Activated naive CD4-positive, alpha-beta T cell treated with anti-CD3 and anti-CD28 coated beads, Interleukin-2, amount 10 ng/mL, durations not matched to agents 7 days and 5 days (primary cell): ENCODE measurements at regions of chr15 and their contacts with region 1.

Region 1: GRCh38 chr15:71386448-71387236 is 271.4 kb downstream of the THSD4 start:
- DNase-seq: no peak
- H3K4me3 Mint-ChIP-seq: no peak overlapping the region
- H3K27ac Mint-ChIP-seq: no peak overlapping the region
- H3K4me1 Mint-ChIP-seq: peaks cover 3% of the 10 kb centered on the region
- H3K27me3 Mint-ChIP-seq: peaks cover 22% of the 10 kb centered on the region

Region 2: DNA sequence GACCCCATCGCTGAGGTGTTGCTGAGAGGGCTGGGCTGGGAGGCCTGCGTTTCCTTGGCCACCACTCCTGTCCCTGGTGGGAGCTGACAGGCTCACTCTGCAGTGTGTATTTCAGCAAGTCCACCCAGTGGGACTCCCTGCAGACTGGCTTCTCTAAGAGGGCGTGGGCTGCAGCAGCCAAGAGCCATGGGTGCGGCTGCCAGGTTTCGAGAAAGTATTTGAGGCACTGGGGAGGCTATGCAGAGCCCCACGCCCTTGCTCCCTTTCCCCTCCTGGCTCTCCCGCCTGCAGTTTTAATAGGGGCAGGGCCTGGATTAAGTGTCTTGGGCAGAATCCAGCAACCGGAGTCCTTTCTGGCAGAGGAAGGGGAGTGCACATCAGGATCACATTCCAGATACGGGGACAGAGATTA is 29.3 kb before region 1 on chr15:
- CTCF ChIA-PET with region 1: no interaction called
- DNase-seq: no peak
- H3K4me3 Mint-ChIP-seq: no peak overlapping the region
- H3K27ac Mint-ChIP-seq: no peak overlapping the region
- H3K4me1 Mint-ChIP-seq: no peaks in the 10 kb centered on the region
- H3K27me3 Mint-ChIP-seq: peaks cover 6% of the 10 kb centered on the region

Region 3: GRCh38 chr15:71443538-71443937 is 56.9 kb after region 1 on chr15:
- CTCF ChIA-PET with region 1: interaction called, 15 read pairs
- DNase-seq: peak; percentile 58
- H3K4me3 Mint-ChIP-seq: no peak overlapping the region
- H3K27ac Mint-ChIP-seq: no peak overlapping the region
- H3K4me1 Mint-ChIP-seq: no peaks in the 10 kb centered on the region
- H3K27me3 Mint-ChIP-seq: no peaks in the 10 kb centered on the region